PC-9 (cell line): ENCODE measurements at regions of chr2 and their contacts with region 1.

Region 1: DNA sequence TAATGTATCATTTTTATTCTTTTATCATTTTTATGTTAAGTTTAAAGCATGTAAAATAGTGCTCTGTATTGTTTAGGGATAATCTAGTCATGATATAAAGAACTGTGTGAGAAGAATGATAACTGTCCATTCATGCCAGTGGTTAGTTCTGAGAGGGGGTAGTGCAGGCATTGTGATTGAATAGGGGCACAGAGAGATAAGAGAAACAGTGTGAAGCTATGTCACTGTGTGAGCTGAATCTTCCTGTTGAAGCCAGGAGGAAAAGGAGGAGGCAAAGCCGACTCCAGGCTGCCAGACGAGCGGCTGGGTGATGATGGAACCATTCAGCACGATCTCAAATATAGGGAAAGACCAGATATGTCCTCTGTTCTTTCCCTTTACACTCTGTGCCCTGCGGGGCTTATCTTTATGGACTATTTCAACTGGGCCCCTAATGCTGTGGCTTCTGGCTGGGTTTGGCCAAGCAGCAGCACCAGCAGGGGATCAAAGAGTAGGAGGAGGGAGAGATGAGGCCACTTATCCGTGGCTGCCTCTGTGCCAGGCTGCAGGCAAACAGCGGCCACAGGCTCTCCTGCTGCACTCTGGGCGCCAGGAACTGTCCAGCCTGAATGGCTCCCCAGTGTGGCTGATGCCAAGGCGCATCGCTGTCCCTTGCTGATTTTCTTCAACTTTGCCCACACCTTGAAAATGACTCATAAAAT is 128.0 kb downstream of the SPP2 start:
- DNase-seq: peak in 1 of 2 experiments; percentile 77
- H3K4me3 ChIP-seq: no peak overlapping the region
- H3K27ac ChIP-seq: no peak overlapping the region; the same call in 1 of the 2 replicates
- H3K4me1 ChIP-seq: peaks cover 25% of the 10 kb centered on the region
- H3K27me3 ChIP-seq: no peaks in the 10 kb centered on the region
- CTCF ChIP-seq: no peak

Region 2: GRCh38 chr2:233919319-233919718 is 259.2 kb before region 1 on chr2:
- CTCF ChIA-PET with region 1: interaction called, 11 read pairs
- POLR2A ChIA-PET with region 1: no interaction called
- intact Hi-C with region 1: no loop called
- DNase-seq: no peak
- H3K4me3 ChIP-seq: no peak overlapping the region
- H3K27ac ChIP-seq: no peak overlapping the region
- H3K4me1 ChIP-seq: no peaks in the 10 kb centered on the region
- H3K27me3 ChIP-seq: peaks cover 14% of the 10 kb centered on the region; the same call in 1 of the 2 replicates
- CTCF ChIP-seq: no peak

Region 3: GRCh38 chr2:234137400-234138014 is 41.0 kb before region 1 on chr2:
- CTCF ChIA-PET with region 1: no interaction called
- POLR2A ChIA-PET with region 1: no interaction called
- intact Hi-C with region 1: no loop called
- DNase-seq: peak; percentile 63 to 98
- H3K4me3 ChIP-seq: no peak overlapping the region
- H3K27ac ChIP-seq: peak overlapping the region; percentile 66
- H3K4me1 ChIP-seq: peaks cover 30% of the 10 kb centered on the region
- H3K27me3 ChIP-seq: no peaks in the 10 kb centered on the region
- CTCF ChIP-seq: no peak; the same call in 1 of the 2 replicates